ENCODE measurements at regions of chr6 and their contacts with region 1.

Region 1: DNA sequence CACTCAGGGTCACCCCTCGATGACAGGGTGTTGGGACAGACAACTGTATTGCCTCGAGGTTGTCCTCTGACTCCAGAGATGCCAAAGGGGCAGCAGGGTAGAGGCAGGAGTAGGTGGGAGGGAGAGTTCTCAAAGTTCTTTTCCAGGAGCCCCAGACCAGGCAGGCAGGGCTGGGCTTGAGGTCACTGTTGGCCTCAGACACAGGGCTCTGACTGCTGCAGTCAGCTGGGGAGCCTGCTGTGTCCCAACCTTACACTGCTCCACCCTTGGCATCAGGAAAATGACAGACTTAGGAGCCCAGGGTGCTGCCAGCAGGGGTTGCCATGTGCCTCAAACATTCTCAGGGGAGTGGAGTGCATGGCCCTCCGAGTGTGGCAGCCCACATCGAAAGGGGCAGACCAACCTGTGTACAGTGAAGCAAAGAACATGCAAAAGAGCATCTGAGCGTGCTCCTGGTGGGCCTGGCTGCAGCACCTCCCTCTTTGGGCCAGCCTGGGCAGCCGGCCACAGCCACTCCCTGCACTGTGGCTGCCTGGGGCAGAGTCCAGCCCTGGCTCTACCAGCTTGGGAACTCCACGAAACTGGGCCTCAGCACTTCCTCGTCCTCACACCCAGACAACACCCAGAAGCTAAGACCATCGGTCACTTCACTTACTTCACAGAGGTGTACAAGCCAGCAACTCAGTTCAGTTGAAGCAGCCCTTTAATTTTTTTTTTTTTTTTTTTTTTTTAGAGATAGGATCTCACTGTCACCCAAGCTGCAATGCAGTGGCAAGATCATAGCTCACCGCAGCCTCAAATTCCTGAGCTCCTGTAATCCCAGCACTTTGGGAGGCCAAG is 24.0 kb downstream of the C6orf132 start:
- DNase-seq: no peak
- ATAC-seq: peak; percentile 85
- H3K4me3 ChIP-seq: no peak overlapping the region
- H3K27ac ChIP-seq: peak overlapping the region; percentile 78
- H3K4me1 ChIP-seq: peaks cover 33% of the 10 kb centered on the region
- H3K27me3 ChIP-seq: no peaks in the 10 kb centered on the region
- CTCF ChIP-seq: no peak

Region 2: GRCh38 chr6:40336940-40337760 is 1781.2 kb before region 1 on chr6:
- CTCF ChIA-PET with region 1: no interaction called
- POLR2A ChIA-PET with region 1: no interaction called
- in situ Hi-C with region 1: no loop called
- intact Hi-C with region 1: no loop called
- DNase-seq: no peak
- ATAC-seq: no peak
- H3K4me3 ChIP-seq: no peak overlapping the region
- H3K27ac ChIP-seq: no peak overlapping the region
- H3K4me1 ChIP-seq: no peaks in the 10 kb centered on the region
- H3K27me3 ChIP-seq: peaks cover 3% of the 10 kb centered on the region; the same call in 1 of the 2 replicates
- CTCF ChIP-seq: no peak

Region 3: DNA sequence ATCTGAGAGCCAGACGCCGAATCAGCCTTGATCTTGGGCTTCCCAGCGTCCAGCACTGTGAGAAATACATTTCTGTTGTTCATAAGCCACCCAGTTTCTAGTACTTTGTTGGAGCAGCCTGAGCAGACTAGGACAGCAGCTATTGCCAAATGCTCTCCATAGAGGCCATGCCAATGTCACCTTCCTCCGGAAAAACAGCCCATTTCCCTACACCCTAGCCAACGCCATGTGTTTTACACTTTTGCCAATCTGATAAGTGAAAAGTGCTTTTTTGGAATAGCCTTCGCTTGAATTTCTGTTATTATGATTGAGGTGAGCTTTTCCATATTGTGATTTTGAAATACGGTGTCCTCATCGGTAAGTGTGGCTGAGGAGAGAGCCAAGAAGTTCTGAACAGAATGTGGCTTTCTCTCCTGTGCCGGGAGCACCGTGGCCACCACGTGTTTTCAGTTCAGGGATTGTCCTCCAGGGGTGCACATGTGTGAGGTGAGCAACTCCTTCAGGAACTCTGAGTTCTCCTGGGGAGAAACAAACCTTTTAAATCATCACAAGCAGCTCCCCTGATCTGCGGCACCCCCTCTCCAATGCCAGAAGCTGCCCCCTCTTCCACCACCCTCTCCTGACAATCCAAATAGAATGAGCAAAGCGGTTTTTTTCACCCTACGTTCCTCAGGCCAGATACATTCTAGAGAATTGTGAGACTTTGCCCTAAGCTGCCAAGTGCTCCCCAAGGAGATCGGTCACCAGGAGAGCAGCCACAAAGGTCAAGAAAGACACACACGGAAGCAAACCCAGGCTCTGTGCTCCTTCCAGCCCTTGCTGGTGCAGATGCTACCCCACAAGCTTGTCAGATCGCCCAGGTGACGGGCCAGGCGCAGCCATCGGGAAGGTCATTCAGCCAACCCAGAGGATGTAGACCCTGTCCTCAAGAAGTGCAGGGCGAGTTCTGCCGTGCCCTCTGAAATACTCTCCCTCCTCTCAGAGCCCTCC is 32.0 kb before region 1 on chr6:
- CTCF ChIA-PET with region 1: interaction called, 3 read pairs
- POLR2A ChIA-PET with region 1: interaction called, 15 read pairs
- in situ Hi-C with region 1: no loop called
- intact Hi-C with region 1: no loop called
- DNase-seq: no peak
- ATAC-seq: no peak
- H3K4me3 ChIP-seq: no peak overlapping the region
- H3K27ac ChIP-seq: no peak overlapping the region
- H3K4me1 ChIP-seq: peaks cover 10% of the 10 kb centered on the region
- H3K27me3 ChIP-seq: no peaks in the 10 kb centered on the region
- CTCF ChIP-seq: no peak